Endothelial cell of umbilical vein (primary cell): ENCODE measurements at regions of chr7 and their contacts with region 1.

Region 1: DNA sequence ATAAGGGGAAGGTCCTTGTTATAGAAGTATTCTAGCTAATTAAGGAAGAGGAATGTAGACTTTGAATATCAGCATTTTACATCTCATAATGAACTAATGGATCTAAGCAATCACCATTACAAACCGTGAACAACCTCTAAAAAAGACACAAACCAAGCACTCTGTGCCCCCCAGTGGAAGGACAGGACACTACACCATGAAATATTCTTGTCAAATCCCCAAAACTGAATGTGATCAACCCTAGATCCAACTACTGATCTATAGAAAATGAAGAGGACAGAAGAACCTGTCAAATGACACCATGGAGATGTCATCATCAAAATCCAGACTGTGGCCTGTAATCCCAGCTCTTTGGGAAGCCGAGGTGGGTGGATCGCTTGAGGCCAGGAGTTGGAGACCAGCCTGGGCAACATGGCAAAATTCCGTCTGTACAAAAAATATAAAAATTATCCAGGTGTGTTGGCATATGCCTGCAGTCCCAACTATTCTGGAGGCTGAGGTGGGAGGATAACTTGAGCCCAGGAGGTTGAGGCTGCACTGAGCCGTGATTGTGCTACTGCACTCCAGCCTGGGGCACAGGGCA is 111.3 kb upstream of the CARD11 start:
- DNase-seq: peak; percentile 64
- H3K4me3 ChIP-seq: no peak overlapping the region
- H3K27ac ChIP-seq: no peak overlapping the region
- H3K4me1 ChIP-seq: no peaks in the 10 kb centered on the region
- H3K27me3 ChIP-seq: peaks cover 0 to 15% of the 10 kb centered on the region in 2 experiments
- CTCF ChIP-seq: peak; percentile 52 to 55
- POLR2A ChIP-seq: no peak

Region 2: DNA sequence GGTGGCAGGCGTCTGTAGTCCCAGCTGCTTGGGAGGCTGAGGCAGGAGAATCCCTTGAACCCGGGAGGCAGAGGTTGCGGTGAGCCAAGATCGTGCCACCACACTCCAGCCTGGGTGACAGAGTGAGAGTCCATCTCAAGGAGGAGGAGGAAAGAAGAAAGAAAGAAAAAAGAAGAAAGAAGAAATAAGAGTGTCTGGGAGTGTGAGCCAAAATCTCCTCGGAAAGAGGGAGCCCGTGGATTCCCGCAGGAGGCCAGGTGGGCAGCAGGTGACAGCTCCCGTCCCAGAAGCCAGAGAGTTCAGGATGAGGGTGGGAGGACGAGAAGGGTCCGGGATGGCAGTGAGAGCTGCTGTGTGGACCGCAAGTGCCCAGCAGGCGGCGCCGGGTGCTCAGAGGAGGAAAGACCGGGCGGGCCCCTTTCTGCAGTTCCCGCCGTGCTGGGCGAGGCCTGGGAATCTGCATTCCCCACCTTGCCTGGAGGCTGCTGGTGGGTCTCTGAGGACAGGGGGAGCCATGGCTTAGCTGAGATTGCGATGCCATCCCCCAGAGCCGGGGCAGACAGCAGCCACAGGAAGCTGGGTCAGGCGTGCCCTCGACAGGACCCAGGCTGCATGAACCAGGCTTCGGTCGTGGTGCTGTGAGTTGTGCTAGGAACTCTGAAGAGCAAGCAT is 484.1 kb before region 1 on chr7:
- CTCF ChIA-PET with region 1: no interaction called
- POLR2A ChIA-PET with region 1: no interaction called
- dilution Hi-C with region 1: no loop called
- intact Hi-C with region 1: loop called (anchors 5 kb)
- DNase-seq: peak; percentile 35
- H3K4me3 ChIP-seq: no peak overlapping the region
- H3K27ac ChIP-seq: no peak overlapping the region
- H3K4me1 ChIP-seq: no peaks in the 10 kb centered on the region
- H3K27me3 ChIP-seq: peaks cover 0 to 3% of the 10 kb centered on the region in 2 experiments
- CTCF ChIP-seq: peak; percentile 84 to 95
- POLR2A ChIP-seq: no peak

Region 3: GRCh38 chr7:2993868-2994267 is 161.1 kb before region 1 on chr7:
- CTCF ChIA-PET with region 1: no interaction called
- POLR2A ChIA-PET with region 1: no interaction called
- dilution Hi-C with region 1: no loop called
- intact Hi-C with region 1: no loop called
- DNase-seq: no peak
- H3K4me3 ChIP-seq: no peak overlapping the region
- H3K27ac ChIP-seq: no peak overlapping the region
- H3K4me1 ChIP-seq: peaks cover 5% of the 10 kb centered on the region
- H3K27me3 ChIP-seq: no peaks in the 10 kb centered on the region
- CTCF ChIP-seq: no peak
- POLR2A ChIP-seq: no peak

Region 4: DNA sequence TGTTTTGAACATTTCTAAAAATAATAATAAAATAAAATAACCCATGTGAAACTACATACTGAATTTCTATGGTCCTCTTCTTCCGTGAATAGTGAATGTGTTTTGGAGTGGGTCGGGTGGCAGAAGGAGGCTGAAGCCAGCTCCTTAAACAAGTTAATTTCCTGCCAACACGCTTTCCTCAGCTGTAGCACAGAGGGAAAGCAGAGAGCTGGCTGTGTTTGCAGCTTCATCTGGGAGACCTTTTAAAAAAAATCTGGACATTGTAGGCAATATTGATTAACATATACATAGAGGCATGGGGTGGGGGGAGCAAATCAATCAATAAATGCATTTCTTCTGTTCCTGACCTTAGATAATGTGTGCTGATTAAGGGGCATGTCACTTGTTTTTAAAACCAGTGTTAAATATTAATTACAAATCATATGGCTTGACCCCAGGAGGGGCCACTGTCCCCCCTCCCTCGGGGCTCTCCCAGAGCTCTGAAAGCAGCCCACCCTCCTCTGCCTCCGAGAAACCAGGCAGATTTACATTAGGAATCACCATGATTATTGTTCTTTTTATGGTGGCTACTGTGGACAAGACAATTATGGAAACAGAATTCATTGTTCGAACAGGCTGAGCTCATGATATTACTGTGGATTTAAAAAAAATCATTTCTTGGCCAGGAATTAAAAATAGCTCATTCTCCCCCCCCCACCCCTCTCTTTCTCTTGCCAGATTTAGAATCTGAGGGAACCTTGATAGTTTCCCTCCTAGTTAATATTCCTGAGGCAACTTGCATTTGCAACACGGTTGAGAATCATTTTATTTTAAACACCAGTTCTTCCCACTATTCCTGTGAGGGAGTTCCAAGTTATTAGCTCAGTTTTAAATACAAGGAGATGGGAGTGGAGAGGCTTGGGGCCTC is 10.9 kb before region 1 on chr7:
- CTCF ChIA-PET with region 1: no interaction called
- POLR2A ChIA-PET with region 1: no interaction called
- dilution Hi-C with region 1: no loop called
- intact Hi-C with region 1: no loop called
- DNase-seq: no peak
- H3K4me3 ChIP-seq: no peak overlapping the region
- H3K27ac ChIP-seq: no peak overlapping the region
- H3K4me1 ChIP-seq: no peaks in the 10 kb centered on the region
- H3K27me3 ChIP-seq: peaks cover 2% of the 10 kb centered on the region in 2 experiments
- CTCF ChIP-seq: no peak
- POLR2A ChIP-seq: no peak

Region 5: DNA sequence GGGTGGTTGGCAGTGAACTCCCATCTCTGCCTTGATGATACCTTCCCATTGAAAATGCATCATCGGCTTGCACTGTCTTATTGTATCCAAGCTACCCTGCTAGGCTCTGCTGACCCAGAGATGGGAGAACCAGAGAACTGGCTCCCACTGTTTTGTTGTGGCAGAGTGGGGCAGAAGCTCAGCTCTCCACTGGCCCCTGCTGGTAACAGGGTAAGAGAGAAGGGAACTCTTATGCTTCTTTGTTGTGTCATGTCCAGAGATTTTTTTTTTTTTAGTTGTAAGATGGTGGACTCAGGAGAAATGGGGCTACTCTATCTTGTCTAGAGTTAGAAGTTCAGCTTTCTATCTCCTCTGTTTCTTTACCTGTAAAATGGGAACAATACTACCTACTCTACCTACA is 45.5 kb after region 1 on chr7:
- CTCF ChIA-PET with region 1: no interaction called
- POLR2A ChIA-PET with region 1: no interaction called
- dilution Hi-C with region 1: no loop called
- intact Hi-C with region 1: loop called (anchors 5 kb)
- DNase-seq: peak; percentile 36
- H3K4me3 ChIP-seq: no peak overlapping the region
- H3K27ac ChIP-seq: no peak overlapping the region
- H3K4me1 ChIP-seq: no peaks in the 10 kb centered on the region
- H3K27me3 ChIP-seq: no peaks in the 10 kb centered on the region
- CTCF ChIP-seq: peak; percentile 47 to 51
- POLR2A ChIP-seq: no peak